H1 (cell line): ENCODE measurements at regions of chr19 and their contacts with region 1.

Region 1: DNA sequence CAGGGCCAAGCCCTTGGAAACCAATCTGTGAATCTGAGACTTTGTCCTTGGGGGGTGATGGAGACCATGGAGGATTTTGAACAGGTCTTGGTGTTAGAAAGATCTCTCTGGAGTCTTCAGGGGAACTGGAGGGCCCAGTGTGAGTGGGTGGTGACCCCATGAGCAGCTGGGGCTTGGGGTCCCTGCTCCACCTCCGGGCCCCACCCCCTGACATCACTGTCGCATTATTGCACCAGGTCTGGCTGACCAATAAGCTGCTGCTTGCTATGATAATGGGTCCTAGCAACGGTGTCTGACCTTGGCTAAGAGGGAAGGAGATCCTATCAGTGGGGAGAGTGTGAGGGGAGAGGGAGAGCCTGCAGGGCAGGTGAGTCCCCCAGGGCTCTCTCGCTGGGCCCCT is at the start of gene IRGC:
- DNase-seq: no peak
- H3K4me3 ChIP-seq: no peak within 1 kb of the TSS
- H3K27ac ChIP-seq: no peak within 1 kb of the TSS
- H3K4me1 ChIP-seq: no peaks in the 10 kb centered on the region
- H3K27me3 ChIP-seq: no peaks in the 10 kb centered on the region
- CTCF ChIP-seq: no peak
- EP300 ChIP-seq: no peak
- POLR2A ChIP-seq: no peak
- RAD21 ChIP-seq: no peak
- total RNA-seq, gene IRGC: not detected in 2 replicates

Region 2: DNA sequence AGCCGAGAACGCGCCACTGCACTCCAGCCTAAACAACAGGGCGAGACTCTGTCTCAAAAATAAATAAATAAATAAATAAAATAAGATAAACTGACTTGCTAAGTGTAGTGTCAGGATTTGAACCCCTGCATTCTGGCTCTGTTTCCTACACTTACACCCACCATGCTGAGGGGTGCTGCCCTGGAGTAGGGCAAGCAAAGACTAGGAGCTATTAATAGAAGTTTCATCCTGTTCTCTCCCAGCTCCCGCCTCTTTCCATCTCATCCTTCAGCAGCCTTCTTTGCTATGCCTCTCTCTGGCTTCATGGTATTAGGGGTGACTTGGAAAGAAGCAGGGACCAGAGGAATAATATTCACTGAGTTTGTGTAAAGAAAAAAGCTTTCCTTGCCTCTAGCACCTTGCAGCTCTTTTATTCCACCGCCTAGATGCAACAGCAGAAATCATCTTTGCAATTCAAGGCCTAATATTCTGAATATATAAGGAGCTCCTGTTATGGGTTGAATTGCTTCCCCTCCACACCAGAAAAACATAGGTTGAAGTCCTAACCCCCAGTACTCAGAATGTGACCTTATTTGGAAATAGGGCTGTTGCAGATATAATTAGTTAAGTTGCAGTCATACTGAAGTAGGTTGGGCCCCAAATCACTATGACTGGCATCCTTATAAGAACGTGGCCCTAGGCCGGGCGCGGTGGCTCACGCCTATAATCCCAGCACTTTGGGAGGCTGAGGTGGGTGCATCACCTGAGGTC is 37.1 kb before region 1 on chr19:
- CTCF ChIA-PET with region 1: no interaction called
- POLR2A ChIA-PET with region 1: no interaction called
- DNase-seq: no peak
- H3K4me3 ChIP-seq: no peak overlapping the region
- H3K27ac ChIP-seq: no peak overlapping the region
- H3K4me1 ChIP-seq: peaks cover 0 to 6% (median 2%) of the 10 kb centered on the region in 4 experiments; a peak in 3 of 7 replicates
- H3K27me3 ChIP-seq: no peaks in the 10 kb centered on the region
- CTCF ChIP-seq: no peak
- EP300 ChIP-seq: no peak
- POLR2A ChIP-seq: no peak
- RAD21 ChIP-seq: no peak

Region 3: GRCh38 chr19:43700395-43701000 is 15.3 kb before region 1 on chr19:
- CTCF ChIA-PET with region 1: interaction called, 10 read pairs
- POLR2A ChIA-PET with region 1: interaction called, 3 read pairs
- DNase-seq: no peak
- H3K4me3 ChIP-seq: no peak overlapping the region
- H3K27ac ChIP-seq: no peak overlapping the region
- H3K4me1 ChIP-seq: 0 out of 7 replicates have a peak, but pooled peaks cover 0 to 2% (median 0%) of the 10 kb centered on the region in 4 experiments
- H3K27me3 ChIP-seq: peaks cover 0 to 6% (median 2%) of the 10 kb centered on the region in 4 experiments; a peak in 4 of 7 replicates
- CTCF ChIP-seq: no peak
- EP300 ChIP-seq: no peak
- POLR2A ChIP-seq: no peak
- RAD21 ChIP-seq: no peak

Region 4: DNA sequence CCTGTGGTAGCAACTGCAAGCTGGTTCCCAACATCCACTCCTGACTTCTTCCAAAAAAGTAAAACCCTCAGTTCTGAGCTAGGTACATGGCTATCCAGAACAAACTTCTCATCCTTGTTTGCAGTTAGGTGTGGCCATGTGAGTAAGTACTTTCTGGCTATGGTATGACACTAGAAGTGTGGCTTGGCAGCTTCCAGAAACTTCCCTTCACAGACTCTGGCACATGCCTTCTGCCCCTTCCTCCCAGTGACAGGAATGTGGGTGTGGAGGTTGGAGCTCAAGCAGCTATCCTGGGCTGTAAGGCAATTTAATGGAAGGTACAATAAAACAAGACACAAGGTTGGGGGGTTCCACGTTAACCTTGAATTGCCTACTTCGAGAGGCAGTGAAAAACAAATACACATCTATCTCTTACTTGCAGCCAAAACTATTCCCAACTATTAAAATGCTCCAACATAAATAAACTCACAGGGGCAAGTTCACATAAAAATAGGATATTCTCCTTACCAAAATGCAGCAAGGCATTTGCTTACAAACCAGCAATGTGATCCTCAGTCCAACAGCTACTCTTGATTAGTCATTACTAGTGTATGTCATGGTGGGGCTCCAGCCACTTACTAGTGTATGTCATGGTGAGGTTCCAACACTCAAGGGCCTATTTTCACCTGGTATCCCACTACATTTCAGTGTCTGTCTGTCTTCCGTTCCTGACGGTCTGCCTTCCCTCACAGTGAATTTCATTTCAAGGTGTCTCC is 35.9 kb after region 1 on chr19:
- CTCF ChIA-PET with region 1: no interaction called
- POLR2A ChIA-PET with region 1: no interaction called
- DNase-seq: no peak
- H3K4me3 ChIP-seq: no peak overlapping the region
- H3K27ac ChIP-seq: no peak overlapping the region
- H3K4me1 ChIP-seq: no peaks in the 10 kb centered on the region
- H3K27me3 ChIP-seq: no peaks in the 10 kb centered on the region
- CTCF ChIP-seq: no peak
- EP300 ChIP-seq: no peak
- POLR2A ChIP-seq: no peak
- RAD21 ChIP-seq: no peak

Region 5: DNA sequence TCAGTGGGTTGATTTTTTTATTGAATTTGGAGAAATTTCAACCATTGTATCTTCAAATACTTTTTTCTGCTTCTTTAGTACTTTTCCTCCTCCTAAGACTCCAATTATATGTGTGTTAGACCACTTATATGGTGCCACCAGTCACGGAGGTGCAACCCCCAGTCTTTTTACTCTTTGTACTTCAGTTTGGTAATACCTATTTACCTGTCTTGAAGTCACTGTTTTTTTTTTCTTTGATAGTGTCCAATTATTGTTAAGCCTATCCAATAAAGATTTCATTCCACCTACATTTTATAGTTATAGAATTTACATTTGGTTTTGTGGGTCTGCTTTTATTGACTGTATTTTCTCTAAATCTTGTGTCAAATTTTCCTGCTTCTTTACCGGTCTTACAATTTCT is 126.2 kb after region 1 on chr19:
- CTCF ChIA-PET with region 1: no interaction called
- POLR2A ChIA-PET with region 1: no interaction called
- DNase-seq: no peak
- H3K4me3 ChIP-seq: no peak overlapping the region
- H3K27ac ChIP-seq: no peak overlapping the region
- H3K4me1 ChIP-seq: no peaks in the 10 kb centered on the region
- H3K27me3 ChIP-seq: no peaks in the 10 kb centered on the region
- CTCF ChIP-seq: no peak
- EP300 ChIP-seq: no peak
- POLR2A ChIP-seq: no peak
- RAD21 ChIP-seq: no peak